Dorsolateral prefrontal cortex (tissue), 120 donors: ENCODE measurements at regions of chr6 and their contacts with region 1.

Region 1: GRCh38 chr6:150417899-150418826 is 49.4 kb downstream of the IYD start:
- DNase-seq: peak in 2 of 10 donors; percentile 20 to 40
- H3K4me3 ChIP-seq: peak overlapping the region; percentile 2 to 69 (median 48)
- H3K27ac ChIP-seq: peak overlapping the region in 28 of 59 donors; percentile 1 to 80 (median 58)
- H3K27me3 ChIP-seq: peaks cover 0 to 4% (median 0%) of the 10 kb centered on the region in 45 donors
- CTCF ChIP-seq: peak; percentile 56 to 93 (median 84)

Region 2: DNA sequence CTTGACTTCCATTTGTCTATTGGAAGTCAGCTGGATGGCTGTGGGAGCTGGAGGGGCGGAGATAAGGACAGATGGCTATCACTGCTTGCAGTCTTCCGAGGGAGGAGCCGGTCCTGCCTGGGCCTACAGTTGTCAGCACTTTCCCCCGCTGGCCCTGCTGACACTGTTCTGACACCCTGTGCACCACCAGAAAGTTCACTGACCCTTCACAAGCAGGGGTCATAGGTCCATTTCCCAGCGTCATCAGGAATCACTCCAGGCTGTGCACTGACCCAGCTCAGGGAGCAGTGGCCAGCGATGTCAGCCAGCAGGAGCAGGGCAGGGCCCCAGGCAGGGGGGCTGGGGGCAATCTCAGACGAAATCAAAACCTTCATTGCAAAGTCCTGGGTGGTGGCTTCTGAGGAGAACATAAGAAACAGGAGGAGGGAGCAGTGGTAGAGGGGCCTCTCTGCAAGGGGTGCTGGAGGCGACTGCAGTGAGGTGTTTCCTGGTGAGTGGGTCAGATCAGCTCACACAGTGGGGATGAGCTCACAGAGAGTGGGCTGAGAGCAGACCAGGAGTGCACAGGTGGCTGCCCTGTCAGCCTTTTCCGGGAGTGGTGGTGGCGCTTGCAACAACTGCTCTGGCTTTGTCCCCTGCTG is 155.0 kb after region 1 on chr6:
- intact Hi-C with region 1: loop called in 1 of 2 experiments (anchors 10 kb)
- DNase-seq: no peak
- H3K4me3 ChIP-seq: no peak overlapping the region
- H3K27ac ChIP-seq: no peak overlapping the region
- H3K27me3 ChIP-seq: peaks cover 0 to 7% (median 0%) of the 10 kb centered on the region in 45 donors
- CTCF ChIP-seq: no peak

Region 3: GRCh38 chr6:150579611-150580010 is 161.4 kb after region 1 on chr6:
- intact Hi-C with region 1: loop called (anchors 10 kb)
- DNase-seq: peak in 9 of 10 donors; percentile 37 to 87 (median 72)
- H3K4me3 ChIP-seq: no peak overlapping the region
- H3K27ac ChIP-seq: peak overlapping the region in 23 of 59 donors; percentile 3 to 68 (median 40)
- H3K27me3 ChIP-seq: no peaks in the 10 kb centered on the region
- CTCF ChIP-seq: no peak

Region 4: DNA sequence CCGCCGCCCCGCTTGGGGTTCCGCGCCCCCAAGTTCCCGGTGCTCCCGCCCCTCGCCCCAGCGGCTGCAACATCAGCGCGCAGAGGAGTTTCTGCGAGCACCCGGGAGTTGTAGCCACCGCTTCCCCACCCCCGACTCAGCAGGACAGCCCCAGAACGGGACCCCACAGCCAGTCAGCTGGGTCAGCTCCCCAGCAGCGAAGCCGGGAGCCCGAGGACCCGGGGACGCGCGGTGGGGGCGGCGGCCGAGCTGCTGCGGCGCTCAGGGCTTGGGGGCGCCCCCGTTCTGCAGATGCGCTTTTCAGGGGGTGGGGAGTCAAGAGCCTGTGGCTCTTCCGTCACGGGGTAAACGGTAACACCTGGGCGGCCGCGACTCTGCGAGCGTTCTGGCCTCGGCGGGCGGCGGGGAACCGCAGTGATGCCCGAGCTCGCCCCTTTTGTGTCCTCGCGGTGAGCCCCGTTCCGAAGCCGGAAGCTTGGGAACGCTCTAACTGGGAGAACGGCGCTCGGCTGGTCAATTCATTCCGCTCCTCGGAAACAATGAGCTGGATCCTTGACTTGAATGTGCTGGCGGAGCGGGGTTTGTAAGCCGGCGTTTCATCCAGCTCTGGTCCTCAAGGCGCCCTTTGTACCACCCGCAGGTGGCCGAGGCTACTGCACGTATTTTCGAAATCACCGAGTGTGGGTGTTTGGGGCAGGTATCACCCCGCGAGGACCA is 182.3 kb after region 1 on chr6:
- intact Hi-C with region 1: loop called in 1 of 2 experiments (anchors 10 kb)
- DNase-seq: peak in 8 of 10 donors; percentile 40 to 68 (median 58)
- H3K4me3 ChIP-seq: peak overlapping the region; percentile 53 to 88 (median 77)
- H3K27ac ChIP-seq: peak overlapping the region in 58 of 59 donors; percentile 2 to 92 (median 80)
- H3K27me3 ChIP-seq: peaks cover 0 to 5% (median 0%) of the 10 kb centered on the region in 45 donors
- CTCF ChIP-seq: peak in 38 of 56 donors; percentile 2 to 55 (median 26)